Activated CD4-positive, alpha-beta memory T cell treated with anti-CD3 and anti-CD28 coated beads, Interleukin-2, amount 10 ng/mL, durations not matched to agents 7 days and 5 days (primary cell): ENCODE measurements at regions of chr4 and their contacts with region 1.

Region 1: DNA sequence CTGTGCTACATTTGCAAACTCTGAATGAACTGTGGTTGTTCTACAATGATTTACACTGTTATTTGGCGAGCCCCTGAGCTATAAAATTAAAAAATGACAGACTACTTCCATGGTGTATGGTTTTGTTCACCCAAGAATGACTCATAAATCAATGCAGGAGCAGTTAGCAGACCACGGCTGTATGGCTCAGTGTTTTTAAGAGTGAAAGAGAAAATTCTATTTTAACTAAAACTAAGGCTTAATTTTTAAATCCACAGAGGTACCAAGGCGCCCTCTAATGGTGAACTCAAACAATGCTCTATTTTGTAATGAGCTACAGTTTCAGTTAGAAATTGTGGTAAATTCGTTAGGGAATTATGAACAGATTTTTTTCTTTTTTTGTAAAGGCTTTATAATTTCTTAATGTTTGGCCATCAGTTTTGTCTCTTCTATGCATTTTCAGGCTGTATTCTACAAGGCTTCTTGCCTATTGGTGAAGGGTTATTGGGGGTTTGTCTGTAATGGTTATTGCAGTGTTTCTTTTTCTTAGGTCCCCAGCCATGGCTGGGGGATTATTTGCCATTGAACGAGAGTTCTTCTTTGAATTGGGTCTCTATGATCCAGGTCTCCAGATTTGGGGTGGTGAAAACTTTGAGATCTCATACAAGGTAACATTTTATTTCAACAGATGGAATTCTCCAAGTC is 32.5 kb downstream of the HMGB2 start:
- DNase-seq: no peak
- H3K4me3 Mint-ChIP-seq: no peak overlapping the region
- H3K27ac Mint-ChIP-seq: no peak overlapping the region
- H3K4me1 Mint-ChIP-seq: peaks cover 3% of the 10 kb centered on the region
- H3K27me3 Mint-ChIP-seq: no peaks in the 10 kb centered on the region

Region 2: DNA sequence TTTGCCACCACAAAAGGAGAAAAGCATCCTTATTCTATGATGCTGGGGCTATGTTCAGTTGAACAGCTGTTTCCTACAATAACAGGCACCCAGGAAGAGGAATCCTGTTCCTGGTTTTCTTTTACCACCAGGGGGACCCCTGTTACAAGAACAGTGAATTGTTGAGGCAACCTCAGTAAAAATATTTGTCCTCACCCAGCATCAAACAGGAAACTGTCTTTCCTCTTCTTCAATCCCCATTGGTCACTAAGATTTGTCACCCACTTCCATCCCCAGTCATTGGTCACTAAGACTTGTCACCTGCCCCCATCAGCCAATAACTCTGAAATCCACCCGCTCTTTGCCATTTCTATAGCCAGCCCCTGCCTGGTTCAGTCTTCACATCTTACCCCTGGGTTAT is 276.5 kb before region 1 on chr4:
- CTCF ChIA-PET with region 1: interaction called, 15 read pairs
- POLR2A ChIA-PET with region 1: no interaction called
- DNase-seq: no peak
- H3K4me3 Mint-ChIP-seq: no peak overlapping the region
- H3K27ac Mint-ChIP-seq: no peak overlapping the region
- H3K4me1 Mint-ChIP-seq: no peaks in the 10 kb centered on the region
- H3K27me3 Mint-ChIP-seq: peaks cover 2% of the 10 kb centered on the region

Region 3: GRCh38 chr4:173288296-173288695 is 13.4 kb before region 1 on chr4:
- CTCF ChIA-PET with region 1: interaction called, 33 read pairs
- POLR2A ChIA-PET with region 1: interaction called, 4 read pairs
- DNase-seq: peak; percentile 78
- H3K4me3 Mint-ChIP-seq: peak overlapping the region; percentile 25
- H3K27ac Mint-ChIP-seq: peak overlapping the region; percentile 33
- H3K4me1 Mint-ChIP-seq: peaks cover 16% of the 10 kb centered on the region
- H3K27me3 Mint-ChIP-seq: no peaks in the 10 kb centered on the region

Region 4: DNA sequence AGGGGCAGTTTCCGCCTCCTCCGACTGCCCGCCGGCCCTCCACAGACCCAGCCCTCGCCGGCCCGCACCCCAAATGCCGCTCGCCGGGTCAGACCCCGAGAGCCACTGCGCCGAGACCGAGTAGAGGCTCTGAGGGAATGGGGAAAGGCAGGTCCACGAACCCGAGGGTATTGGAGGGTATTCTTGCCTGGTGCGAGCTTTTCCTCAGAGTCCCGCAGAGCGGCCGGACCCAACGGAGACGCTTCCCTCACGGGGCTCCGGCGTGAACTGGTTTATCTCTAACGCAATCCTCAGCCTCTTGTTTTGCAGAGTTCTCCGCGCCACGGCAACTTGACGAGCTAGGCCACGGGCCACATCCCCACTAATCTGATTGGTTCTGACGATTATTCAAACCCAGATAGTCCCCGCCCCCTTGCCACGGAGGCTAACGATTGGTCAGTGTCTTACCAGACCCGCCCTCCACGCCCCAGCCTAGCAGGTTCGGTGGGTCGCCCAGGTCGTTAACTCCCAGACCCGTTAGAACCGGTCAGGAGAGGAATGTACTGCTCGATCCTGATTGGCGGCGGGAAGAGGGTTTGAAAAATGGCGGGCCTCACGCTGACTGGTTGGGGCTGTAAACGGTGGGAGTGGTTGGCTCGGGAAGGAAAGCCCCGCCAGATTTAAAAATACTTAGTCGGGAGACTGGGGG is 32.6 kb after region 1 on chr4 and contains the start of gene HMGB2:
- CTCF ChIA-PET with region 1: interaction called, 14 read pairs
- POLR2A ChIA-PET with region 1: interaction called, 6 read pairs
- DNase-seq: peak; percentile 100
- H3K4me3 Mint-ChIP-seq: peak within 1 kb of the TSS; percentile 94
- H3K27ac Mint-ChIP-seq: peak within 1 kb of the TSS; percentile 98
- H3K4me1 Mint-ChIP-seq: peaks cover 40% of the 10 kb centered on the region
- H3K27me3 Mint-ChIP-seq: no peaks in the 10 kb centered on the region
- total RNA-seq, gene HMGB2: 776 to 794 TPM

Region 5: GRCh38 chr4:173420324-173420752 is 118.7 kb after region 1 on chr4:
- CTCF ChIA-PET with region 1: interaction called, 20 read pairs
- POLR2A ChIA-PET with region 1: no interaction called
- DNase-seq: no peak
- H3K4me3 Mint-ChIP-seq: no peak overlapping the region
- H3K27ac Mint-ChIP-seq: no peak overlapping the region
- H3K4me1 Mint-ChIP-seq: peaks cover 11% of the 10 kb centered on the region
- H3K27me3 Mint-ChIP-seq: no peaks in the 10 kb centered on the region